SK-N-SH (cell line): ENCODE measurements at regions of chr5 and their contacts with region 1.

Region 1: GRCh38 chr5:32232441-32233219 is 58.5 kb upstream of the GOLPH3 start:
- DNase-seq: peak; percentile 71
- H3K4me3 ChIP-seq: no peak overlapping the region; a peak in 1 of 4 replicates
- H3K27ac ChIP-seq: no peak overlapping the region
- H3K4me1 ChIP-seq: peaks cover 0 to 9% of the 10 kb centered on the region in 2 experiments; a peak in 1 of 4 replicates
- H3K27me3 ChIP-seq: no peaks in the 10 kb centered on the region
- CTCF ChIP-seq: peak; percentile 86
- EP300 ChIP-seq: no peak
- RAD21 ChIP-seq: peak; percentile 83

Region 2: GRCh38 chr5:32069396-32069795 is 163.2 kb before region 1 on chr5:
- CTCF ChIA-PET with region 1: no interaction called
- POLR2A ChIA-PET with region 1: no interaction called
- DNase-seq: no peak
- H3K4me3 ChIP-seq: no peak overlapping the region
- H3K27ac ChIP-seq: no peak overlapping the region
- H3K4me1 ChIP-seq: no peaks in the 10 kb centered on the region; a peak in 1 of 4 replicates
- H3K27me3 ChIP-seq: no peaks in the 10 kb centered on the region; the same call in 1 of the 2 replicates
- CTCF ChIP-seq: no peak
- EP300 ChIP-seq: no peak
- RAD21 ChIP-seq: no peak

Region 3: DNA sequence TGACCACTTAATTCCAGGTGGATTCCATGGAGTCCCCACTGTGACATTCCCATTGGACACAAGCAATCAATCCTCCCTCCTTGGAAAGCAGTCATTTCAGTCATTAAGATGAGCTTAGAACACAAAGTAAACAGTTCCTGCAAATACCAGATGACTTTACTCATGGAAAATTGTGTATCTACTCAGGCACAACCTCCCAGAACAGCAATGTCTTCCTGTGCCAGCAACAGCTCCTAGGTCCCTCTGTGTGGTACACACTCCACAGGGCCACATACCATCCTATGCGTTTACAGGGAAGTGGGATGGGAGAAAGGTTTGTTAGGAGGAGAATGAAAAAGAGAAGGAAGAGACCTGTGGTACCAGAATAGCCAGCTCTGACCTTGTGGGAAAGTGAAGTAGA is 26.4 kb after region 1 on chr5:
- CTCF ChIA-PET with region 1: interaction called, 11 read pairs
- POLR2A ChIA-PET with region 1: no interaction called
- DNase-seq: no peak
- H3K4me3 ChIP-seq: no peak overlapping the region
- H3K27ac ChIP-seq: no peak overlapping the region
- H3K4me1 ChIP-seq: no peaks in the 10 kb centered on the region
- H3K27me3 ChIP-seq: no peaks in the 10 kb centered on the region
- CTCF ChIP-seq: no peak
- EP300 ChIP-seq: no peak
- RAD21 ChIP-seq: no peak

Region 4: GRCh38 chr5:32329308-32329834 is 96.7 kb after region 1 on chr5:
- CTCF ChIA-PET with region 1: interaction called, 71 read pairs
- POLR2A ChIA-PET with region 1: no interaction called
- DNase-seq: peak; percentile 72
- H3K4me3 ChIP-seq: no peak overlapping the region
- H3K27ac ChIP-seq: no peak overlapping the region
- H3K4me1 ChIP-seq: no peaks in the 10 kb centered on the region
- H3K27me3 ChIP-seq: no peaks in the 10 kb centered on the region
- CTCF ChIP-seq: peak; percentile 57
- EP300 ChIP-seq: no peak
- RAD21 ChIP-seq: peak; percentile 79

Region 5: DNA sequence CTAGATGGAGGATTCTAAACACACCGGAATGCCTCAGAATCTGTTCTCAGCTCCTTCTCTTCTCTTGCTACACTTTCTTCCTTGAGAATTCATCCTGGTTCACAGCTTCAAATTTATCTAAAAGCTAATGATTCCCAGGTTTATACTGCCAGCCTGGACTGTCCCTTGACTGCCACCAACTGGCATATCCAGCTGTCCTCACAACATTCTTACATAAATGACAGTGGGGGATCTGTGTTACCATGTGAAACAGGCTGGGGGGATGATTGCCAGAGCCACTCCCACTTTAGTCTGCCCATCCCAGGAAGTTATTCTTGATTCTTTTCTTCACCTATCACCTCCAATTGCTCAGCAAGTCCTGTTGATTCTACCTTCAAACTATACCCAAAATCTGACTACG is 239.2 kb after region 1 on chr5:
- CTCF ChIA-PET with region 1: interaction called, 14 read pairs
- POLR2A ChIA-PET with region 1: no interaction called
- DNase-seq: peak; percentile 21
- H3K4me3 ChIP-seq: no peak overlapping the region
- H3K27ac ChIP-seq: no peak overlapping the region
- H3K4me1 ChIP-seq: no peaks in the 10 kb centered on the region
- H3K27me3 ChIP-seq: no peaks in the 10 kb centered on the region; the same call in 1 of the 2 replicates
- CTCF ChIP-seq: no peak
- EP300 ChIP-seq: no peak
- RAD21 ChIP-seq: peak; percentile 61